ENCODE measurements at regions of chr12 and their contacts with region 1.

Region 1: DNA sequence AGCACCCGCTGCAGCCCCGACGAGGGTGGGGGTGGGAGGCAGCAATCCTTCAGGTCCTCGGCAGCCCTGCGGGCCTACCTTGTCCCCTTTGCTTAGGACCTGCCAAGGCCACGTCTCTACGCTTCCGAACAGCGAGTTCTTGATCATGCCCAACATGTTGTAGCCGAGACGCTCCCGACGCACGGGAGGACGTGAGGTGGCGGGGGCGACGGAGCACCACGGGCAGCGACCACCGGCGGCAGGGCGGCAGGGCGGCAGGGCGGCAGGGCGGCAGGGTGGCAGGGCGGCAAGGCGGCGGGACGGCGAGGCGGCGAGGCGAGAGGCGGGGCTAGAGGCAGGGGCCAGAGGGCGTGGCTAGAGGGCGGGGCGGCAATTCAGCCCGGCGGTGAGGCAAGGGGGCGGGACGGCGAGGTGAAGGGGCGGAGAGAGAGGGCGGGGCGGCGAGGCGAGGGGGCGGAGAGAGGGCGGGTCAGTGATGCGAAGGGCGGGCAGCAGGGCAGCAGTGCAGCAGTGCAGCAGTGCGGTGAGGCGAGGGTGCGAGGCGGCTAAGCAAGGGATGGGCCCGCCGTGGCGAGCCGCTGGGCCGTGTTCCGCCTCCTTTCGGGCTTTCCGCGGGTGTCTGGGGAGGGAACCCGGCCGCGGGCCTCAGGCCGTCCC is at the start of gene HEBP1:
- H3K4me3 Mint-ChIP-seq: peak within 1 kb of the TSS; percentile 95
- H3K27ac Mint-ChIP-seq: peak within 1 kb of the TSS; percentile 99
- H3K4me1 Mint-ChIP-seq: peaks cover 63% of the 10 kb centered on the region
- H3K27me3 Mint-ChIP-seq: no peaks in the 10 kb centered on the region

Region 2: GRCh38 chr12:13044002-13044905 is 44.2 kb after region 1 on chr12 and contains the start of gene FAM234B:
- intact Hi-C with region 1: loop called (anchors 2 kb)
- H3K4me3 Mint-ChIP-seq: peak within 1 kb of the TSS; percentile 88
- H3K27ac Mint-ChIP-seq: peak within 1 kb of the TSS; percentile 82
- H3K4me1 Mint-ChIP-seq: peaks cover 28% of the 10 kb centered on the region
- H3K27me3 Mint-ChIP-seq: peaks cover 16% of the 10 kb centered on the region

Region 3: GRCh38 chr12:13196130-13196921 is 196.2 kb after region 1 on chr12 and contains the start of gene EMP1:
- intact Hi-C with region 1: loop called (anchors 1 kb)
- H3K4me3 Mint-ChIP-seq: peak within 1 kb of the TSS; percentile 78
- H3K27ac Mint-ChIP-seq: peak within 1 kb of the TSS; percentile 86
- H3K4me1 Mint-ChIP-seq: peaks cover 71% of the 10 kb centered on the region
- H3K27me3 Mint-ChIP-seq: peaks cover 2% of the 10 kb centered on the region